H1 (cell line): ENCODE measurements at regions of chr1 and their contacts with region 1.

Region 1: DNA sequence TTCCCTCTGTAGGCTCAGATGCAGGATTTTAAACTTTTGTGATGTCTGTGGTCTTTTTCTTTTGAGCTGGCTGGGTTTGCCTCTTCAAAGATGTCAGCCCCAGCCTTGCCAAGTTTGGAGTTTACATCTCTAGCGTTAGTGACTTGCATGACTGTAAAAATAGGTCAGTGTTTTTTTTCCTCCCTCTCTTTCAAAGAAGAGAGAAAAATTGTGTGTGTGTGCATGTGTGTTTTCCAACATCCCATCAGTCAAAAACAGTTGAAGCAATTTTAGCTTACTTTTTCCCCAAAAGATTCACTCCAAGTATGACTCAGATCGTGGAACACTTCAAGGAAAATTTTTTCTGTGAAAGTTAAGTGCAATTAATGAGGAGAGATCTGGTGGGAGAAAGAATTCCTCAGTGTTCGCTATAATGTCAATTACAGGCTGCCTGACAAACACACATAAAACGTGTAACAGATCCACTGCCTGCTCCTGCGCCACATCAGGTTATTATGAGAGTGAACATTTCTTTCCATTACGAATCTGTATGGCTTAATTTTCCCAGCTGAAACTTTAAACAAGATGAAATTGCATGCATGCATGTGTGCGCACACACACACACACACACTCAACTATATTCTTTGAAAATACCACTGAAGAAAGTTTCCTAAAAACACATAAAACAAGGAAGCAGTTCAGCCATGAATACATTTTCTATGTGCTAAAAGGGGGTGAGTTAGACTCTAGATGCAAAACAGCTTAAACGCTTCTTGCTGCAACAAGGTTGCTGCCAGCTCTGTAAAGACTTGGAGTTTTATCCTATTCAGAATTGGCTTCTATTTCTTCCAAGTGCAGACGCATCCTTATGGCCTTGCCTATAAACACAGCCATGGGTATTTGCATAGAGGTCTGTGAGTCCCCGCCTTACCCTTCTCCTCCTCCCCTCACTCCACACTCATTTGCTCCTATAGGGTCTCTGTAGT is 55.5 kb downstream of the TLR5 start:
- DNase-seq: no peak
- H3K4me3 ChIP-seq: no peak overlapping the region
- H3K27ac ChIP-seq: no peak overlapping the region
- H3K4me1 ChIP-seq: peaks cover 0 to 4% (median 0%) of the 10 kb centered on the region in 4 experiments; a peak in 1 of 7 replicates
- H3K27me3 ChIP-seq: peaks cover 0 to 5% (median 1%) of the 10 kb centered on the region in 4 experiments; a peak in 3 of 7 replicates
- CTCF ChIP-seq: no peak
- EP300 ChIP-seq: no peak
- POLR2A ChIP-seq: no peak
- RAD21 ChIP-seq: no peak

Region 2: GRCh38 chr1:222750651-222751050 is 336.9 kb before region 1 on chr1:
- CTCF ChIA-PET with region 1: interaction called, 12 read pairs
- POLR2A ChIA-PET with region 1: no interaction called
- DNase-seq: no peak
- H3K4me3 ChIP-seq: no peak overlapping the region
- H3K27ac ChIP-seq: no peak overlapping the region
- H3K4me1 ChIP-seq: no peaks in the 10 kb centered on the region
- H3K27me3 ChIP-seq: no peaks in the 10 kb centered on the region
- CTCF ChIP-seq: no peak
- EP300 ChIP-seq: no peak
- POLR2A ChIP-seq: no peak
- RAD21 ChIP-seq: no peak

Region 3: DNA sequence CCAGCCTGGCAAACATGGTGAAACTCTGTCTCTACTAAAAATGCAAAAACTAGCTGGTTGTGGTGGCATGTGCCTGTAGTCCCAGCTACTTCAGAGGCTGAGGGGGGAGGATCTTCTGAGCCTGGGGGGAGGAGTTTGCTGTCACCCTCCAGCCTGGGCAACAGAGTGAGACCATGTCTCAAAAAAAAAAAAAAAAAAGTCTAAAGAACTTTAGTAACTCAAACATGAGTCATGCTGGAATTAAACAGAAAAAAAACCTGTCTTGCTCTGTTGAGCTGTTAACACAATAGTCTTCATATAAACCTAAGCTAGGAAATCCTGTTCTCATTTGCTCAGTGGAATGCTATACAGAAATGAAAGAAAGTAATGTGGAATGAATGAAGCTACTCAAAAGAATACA is 289.5 kb before region 1 on chr1:
- CTCF ChIA-PET with region 1: interaction called, 163 read pairs
- POLR2A ChIA-PET with region 1: interaction called, 3 read pairs
- DNase-seq: no peak
- H3K4me3 ChIP-seq: no peak overlapping the region
- H3K27ac ChIP-seq: no peak overlapping the region
- H3K4me1 ChIP-seq: no peaks in the 10 kb centered on the region; a peak in 1 of 7 replicates
- H3K27me3 ChIP-seq: no peaks in the 10 kb centered on the region; a peak in 1 of 7 replicates
- CTCF ChIP-seq: no peak
- EP300 ChIP-seq: no peak
- POLR2A ChIP-seq: no peak
- RAD21 ChIP-seq: no peak

Region 4: GRCh38 chr1:223010582-223011504 is 76.7 kb before region 1 on chr1:
- CTCF ChIA-PET with region 1: interaction called, 9 read pairs
- POLR2A ChIA-PET with region 1: interaction called, 12 read pairs
- DNase-seq: no peak
- H3K4me3 ChIP-seq: peak overlapping the region in 2 of 4 experiments; percentile 9 to 22; a peak in 2 of 8 replicates
- H3K27ac ChIP-seq: no peak overlapping the region; the same call in 1 of the 2 replicates
- H3K4me1 ChIP-seq: peaks cover 0 to 5% (median 2%) of the 10 kb centered on the region in 4 experiments; a peak in 4 of 7 replicates
- H3K27me3 ChIP-seq: no peaks in the 10 kb centered on the region
- CTCF ChIP-seq: no peak
- EP300 ChIP-seq: no peak
- POLR2A ChIP-seq: peak in 1 of 2 experiments; percentile 71; a peak in 2 of 3 replicates
- RAD21 ChIP-seq: no peak

Region 5: DNA sequence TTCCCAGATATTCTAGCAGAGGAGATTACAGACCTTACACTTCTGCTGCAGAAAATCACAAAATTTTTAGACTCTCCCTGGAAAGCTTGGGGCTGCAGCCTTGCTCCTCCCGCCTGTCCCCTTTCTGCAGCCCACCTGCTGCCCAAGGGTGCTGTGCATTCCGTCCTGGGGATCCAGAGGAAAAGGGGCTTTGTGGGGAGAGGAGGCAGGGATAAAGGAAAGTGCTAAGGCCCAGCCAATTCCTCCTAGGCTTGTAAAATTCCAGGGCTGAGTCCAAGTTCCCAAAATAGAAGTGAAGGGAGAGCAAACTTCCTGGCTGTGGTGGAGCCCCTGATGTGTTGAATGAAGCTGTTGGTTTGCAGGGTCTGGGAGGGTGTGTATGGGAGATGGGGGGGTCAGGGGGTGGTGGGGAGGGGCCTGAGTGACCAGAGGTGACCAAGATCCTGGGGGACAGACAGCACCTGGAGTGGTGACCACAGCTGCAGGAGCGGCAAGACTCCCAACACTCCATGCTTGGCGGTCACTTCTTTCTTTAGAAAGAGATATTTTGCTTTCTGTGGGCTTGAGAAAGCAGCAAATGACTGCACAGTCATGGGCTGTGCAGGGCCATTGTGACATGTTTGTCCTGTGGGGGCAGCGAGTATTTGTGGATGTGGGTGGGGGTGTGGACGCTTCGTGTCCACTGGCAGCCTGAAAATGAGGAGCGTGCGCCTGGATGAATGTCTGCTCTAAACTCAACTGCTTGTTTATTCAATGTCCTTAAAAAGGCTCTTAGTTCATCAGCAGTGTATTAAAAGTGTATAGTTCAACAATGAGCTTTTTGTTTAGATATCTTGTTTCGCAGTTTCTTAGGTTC is 12.9 kb before region 1 on chr1:
- CTCF ChIA-PET with region 1: interaction called, 13 read pairs
- POLR2A ChIA-PET with region 1: interaction called, 3 read pairs
- DNase-seq: no peak
- H3K4me3 ChIP-seq: no peak overlapping the region
- H3K27ac ChIP-seq: no peak overlapping the region
- H3K4me1 ChIP-seq: peaks cover 4 to 11% (median 7%) of the 10 kb centered on the region in 4 experiments
- H3K27me3 ChIP-seq: no peaks in the 10 kb centered on the region
- CTCF ChIP-seq: no peak
- EP300 ChIP-seq: no peak
- POLR2A ChIP-seq: no peak
- RAD21 ChIP-seq: no peak

Region 6: GRCh38 chr1:223114871-223115270 is 27.3 kb after region 1 on chr1:
- CTCF ChIA-PET with region 1: interaction called, 12 read pairs
- POLR2A ChIA-PET with region 1: no interaction called
- DNase-seq: no peak
- H3K4me3 ChIP-seq: no peak overlapping the region
- H3K27ac ChIP-seq: no peak overlapping the region
- H3K4me1 ChIP-seq: peaks cover 0 to 5% (median 2%) of the 10 kb centered on the region in 4 experiments; a peak in 2 of 7 replicates
- H3K27me3 ChIP-seq: no peaks in the 10 kb centered on the region
- CTCF ChIP-seq: no peak
- EP300 ChIP-seq: no peak
- POLR2A ChIP-seq: no peak
- RAD21 ChIP-seq: no peak